ENCODE measurements at regions of chr1 and their contacts with region 1.

Region 1: GRCh38 chr1:167687919-167688519 is 33.8 kb upstream of the MPZL1 start:
- DNase-seq: peak; percentile 65
- H3K4me3 ChIP-seq: no peak overlapping the region
- H3K27ac ChIP-seq: no peak overlapping the region
- H3K4me1 ChIP-seq: peaks cover 27% of the 10 kb centered on the region
- H3K27me3 ChIP-seq: no peaks in the 10 kb centered on the region
- CTCF ChIP-seq: peak; percentile 87 to 90

Region 2: GRCh38 chr1:167401260-167401873 is 286.7 kb before region 1 on chr1:
- CTCF ChIA-PET with region 1: no interaction called
- dilution Hi-C with region 1: no loop called
- in situ Hi-C with region 1: loop called in 1 of 2 experiments (anchors 25 kb)
- intact Hi-C with region 1: loop called (anchors 1 kb)
- DNase-seq: peak; percentile 57
- H3K4me3 ChIP-seq: no peak overlapping the region
- H3K27ac ChIP-seq: no peak overlapping the region
- H3K4me1 ChIP-seq: peaks cover 3% of the 10 kb centered on the region
- H3K27me3 ChIP-seq: no peaks in the 10 kb centered on the region
- CTCF ChIP-seq: peak; percentile 39 to 64

Region 3: GRCh38 chr1:167553136-167554027 is 134.6 kb before region 1 on chr1 and contains the start of gene CREG1:
- CTCF ChIA-PET with region 1: interaction called, 5 read pairs
- dilution Hi-C with region 1: no loop called
- in situ Hi-C with region 1: loop called in 1 of 2 experiments (anchors 25 kb)
- intact Hi-C with region 1: loop called (anchors 1 kb)
- DNase-seq: peak; percentile 92
- H3K4me3 ChIP-seq: peak within 1 kb of the TSS; percentile 65 to 89 (median 66)
- H3K27ac ChIP-seq: peak within 1 kb of the TSS; percentile 47
- H3K4me1 ChIP-seq: peaks cover 46% of the 10 kb centered on the region
- H3K27me3 ChIP-seq: no peaks in the 10 kb centered on the region
- CTCF ChIP-seq: no peak
- total RNA-seq, gene CREG1: 105 to 242 TPM

Region 4: DNA sequence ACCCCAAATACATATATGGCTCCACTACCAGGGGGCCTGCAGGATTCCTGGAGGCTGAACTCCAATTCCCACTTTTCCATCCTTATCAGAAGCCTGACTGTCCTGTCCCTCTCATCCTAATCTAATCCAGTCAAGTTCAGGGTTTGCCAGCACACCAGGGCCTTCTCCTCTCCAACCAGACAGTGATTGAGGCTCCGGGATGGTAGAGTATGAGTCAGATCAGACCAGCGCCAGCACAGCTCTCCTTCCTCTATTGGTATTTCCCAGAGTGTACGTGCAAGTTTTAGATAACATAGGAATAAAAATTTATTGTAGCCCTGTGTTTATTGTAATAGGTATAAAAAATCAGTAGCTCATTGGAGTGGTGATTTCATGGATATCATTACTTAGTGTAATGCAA is 82.4 kb before region 1 on chr1:
- CTCF ChIA-PET with region 1: interaction called, 9 read pairs
- dilution Hi-C with region 1: loop called (anchors 5 kb)
- in situ Hi-C with region 1: loop called (anchors 5 kb)
- intact Hi-C with region 1: loop called (anchors 1 kb)
- DNase-seq: peak; percentile 66
- H3K4me3 ChIP-seq: no peak overlapping the region
- H3K27ac ChIP-seq: no peak overlapping the region
- H3K4me1 ChIP-seq: peaks cover 11% of the 10 kb centered on the region
- H3K27me3 ChIP-seq: no peaks in the 10 kb centered on the region
- CTCF ChIP-seq: no peak

Region 5: DNA sequence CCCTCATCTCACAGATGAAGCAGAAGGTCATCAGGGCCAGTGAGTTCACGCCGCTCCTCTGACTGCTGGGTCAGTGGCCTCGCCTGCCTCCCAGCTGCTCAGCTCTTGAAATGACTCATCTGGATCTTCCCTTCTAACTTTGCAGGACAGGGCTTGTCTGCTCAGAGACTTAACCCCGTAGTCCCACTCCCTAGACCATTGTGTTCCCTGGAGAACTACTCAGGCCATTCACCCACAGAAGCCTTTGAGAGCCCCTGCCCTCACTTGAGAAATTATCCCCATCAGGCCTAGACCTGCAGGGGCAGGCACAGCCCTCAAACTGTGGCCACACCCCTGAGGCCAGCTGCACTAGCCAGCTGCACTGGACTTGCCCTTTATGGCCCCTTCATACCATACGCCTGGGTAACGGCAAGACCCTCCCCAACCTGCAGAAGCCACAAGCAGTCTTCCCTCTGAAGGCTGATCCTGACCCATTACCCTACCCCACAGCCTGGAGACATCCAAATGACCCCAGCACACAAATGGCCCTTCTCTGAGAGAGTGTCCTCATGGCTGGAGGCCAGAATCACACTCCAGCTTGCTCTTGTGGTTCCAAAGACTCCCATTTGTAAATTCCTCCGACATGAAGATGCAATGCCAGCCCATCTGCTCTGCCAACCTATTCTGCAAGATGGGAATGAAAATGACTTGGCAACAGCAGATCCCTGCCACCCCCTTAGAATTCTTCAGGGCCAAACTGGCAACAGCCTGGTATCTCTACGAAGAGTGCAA is 24.8 kb before region 1 on chr1:
- CTCF ChIA-PET with region 1: interaction called, 3 read pairs
- dilution Hi-C with region 1: no loop called
- in situ Hi-C with region 1: no loop called
- intact Hi-C with region 1: loop called (anchors 1 kb)
- DNase-seq: peak; percentile 100
- H3K4me3 ChIP-seq: peak overlapping the region in 1 of 3 experiments; percentile 1
- H3K27ac ChIP-seq: peak overlapping the region; percentile 91
- H3K4me1 ChIP-seq: peaks cover 64% of the 10 kb centered on the region
- H3K27me3 ChIP-seq: no peaks in the 10 kb centered on the region
- CTCF ChIP-seq: no peak

Region 6: DNA sequence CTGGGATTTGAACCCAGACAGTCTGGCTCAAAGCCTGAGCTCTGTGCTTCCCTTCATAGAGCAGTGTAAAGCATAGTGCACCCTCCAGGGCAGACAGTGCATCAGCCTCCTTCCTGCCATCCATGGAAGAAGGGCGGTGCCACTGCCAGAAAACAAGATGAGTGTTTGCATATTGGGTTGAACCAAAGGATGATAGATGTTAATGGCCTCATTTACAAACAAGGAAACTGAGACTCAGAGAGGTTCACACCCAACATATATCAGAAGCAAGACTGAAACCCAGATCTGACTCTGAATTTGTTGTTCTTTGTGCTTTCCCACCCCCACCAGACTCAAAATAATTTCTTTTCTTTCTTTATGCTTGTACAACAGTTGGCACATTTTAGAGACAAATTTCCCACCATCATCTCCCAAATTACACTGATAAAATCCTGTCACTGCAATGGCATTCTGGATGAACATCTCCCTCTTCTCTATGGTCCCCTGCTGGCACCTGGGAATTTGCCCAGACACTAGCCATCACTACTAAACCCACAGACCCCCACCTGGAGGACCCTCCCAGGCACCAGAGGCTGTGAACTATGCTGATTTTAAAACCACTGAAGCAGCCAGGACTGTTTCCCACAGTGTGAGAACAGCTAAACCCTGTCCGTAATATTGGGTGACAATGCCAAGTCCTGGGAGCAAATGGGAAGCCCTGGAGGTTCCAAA is 11.7 kb before region 1 on chr1:
- CTCF ChIA-PET with region 1: no interaction called
- dilution Hi-C with region 1: no loop called
- in situ Hi-C with region 1: no loop called
- intact Hi-C with region 1: no loop called
- DNase-seq: no peak
- H3K4me3 ChIP-seq: no peak overlapping the region
- H3K27ac ChIP-seq: no peak overlapping the region
- H3K4me1 ChIP-seq: peaks cover 9% of the 10 kb centered on the region
- H3K27me3 ChIP-seq: no peaks in the 10 kb centered on the region
- CTCF ChIP-seq: no peak